ENCODE measurements at regions of chr18 and their contacts with region 1.

Region 1: GRCh38 chr18:79405781-79406575 is 10.2 kb downstream of the NFATC1 start:
- DNase-seq: peak; percentile 59 to 74
- ATAC-seq: peak in 7 of 8 donors; percentile 29 to 77 (median 48)
- H3K4me3 ChIP-seq: peak overlapping the region in 3 of 10 donors; percentile 19 to 47 (median 26)
- H3K27ac ChIP-seq: peak overlapping the region in 9 of 10 donors; percentile 17 to 90 (median 63)
- H3K4me1 ChIP-seq: peaks cover 24 to 59% (median 54%) of the 10 kb centered on the region in 9 donors
- H3K27me3 ChIP-seq: no peaks in the 10 kb centered on the region
- CTCF ChIP-seq: peak in 1 of 9 donors; percentile 6

Region 2: DNA sequence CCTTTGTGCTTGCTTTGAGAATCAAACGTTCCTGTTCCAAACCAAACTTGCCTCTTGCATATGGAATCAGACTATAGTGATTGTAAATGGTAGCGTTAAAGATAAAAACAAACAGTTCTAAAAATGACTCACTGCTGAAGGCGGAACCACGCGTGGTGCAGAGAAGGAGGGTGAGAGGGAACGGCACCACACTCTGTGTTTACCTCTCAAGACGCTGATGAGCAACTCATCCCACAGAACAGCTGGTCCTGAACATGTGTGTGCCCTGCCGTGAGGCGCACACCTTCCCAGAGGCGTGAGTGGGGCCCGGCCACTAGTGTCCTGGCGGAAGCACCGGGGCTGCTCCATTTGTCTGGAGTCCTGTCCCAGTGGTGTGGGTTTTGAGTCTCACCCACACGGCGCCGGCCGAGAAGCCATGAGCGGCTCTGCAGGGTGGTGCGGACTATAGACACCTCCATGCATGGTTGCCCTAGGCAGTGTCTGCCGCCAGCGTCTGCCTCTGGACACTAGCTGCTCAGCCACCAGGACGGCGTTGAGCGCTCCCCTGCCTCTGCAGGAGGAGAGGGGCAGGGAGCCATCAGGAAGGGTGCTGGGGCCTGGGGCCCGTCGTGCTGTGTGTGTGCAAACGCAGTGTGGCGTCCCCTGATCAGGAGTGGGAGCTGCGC is 41.9 kb after region 1 on chr18:
- intact Hi-C with region 1: loop called in 2 of 10 experiments (anchors 5 kb)
- DNase-seq: no peak
- ATAC-seq: peak in 1 of 8 donors; percentile 5
- H3K4me3 ChIP-seq: no peak overlapping the region
- H3K27ac ChIP-seq: no peak overlapping the region
- H3K4me1 ChIP-seq: peaks cover 3 to 19% (median 6%) of the 10 kb centered on the region in 9 donors
- H3K27me3 ChIP-seq: no peaks in the 10 kb centered on the region
- CTCF ChIP-seq: no peak

Region 3: DNA sequence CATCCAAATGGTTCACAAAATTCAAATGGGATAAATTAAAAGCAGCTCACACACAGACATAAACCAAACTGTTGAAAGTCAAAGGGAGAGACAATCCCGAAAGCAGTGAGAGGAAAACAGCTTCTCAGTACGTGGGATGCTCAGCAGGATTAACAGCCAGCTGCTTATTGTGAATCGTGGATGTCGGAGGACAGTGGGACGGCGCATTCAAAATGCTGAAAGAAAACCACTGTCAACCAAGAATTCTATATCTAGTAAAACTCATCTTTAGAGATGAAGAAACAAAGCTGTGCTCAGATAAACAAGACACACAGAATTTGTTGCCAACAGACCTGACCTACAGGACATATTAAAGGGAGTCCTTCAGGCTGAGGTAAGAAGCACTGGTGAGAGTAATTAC is 92.7 kb after region 1 on chr18:
- intact Hi-C with region 1: no loop called
- DNase-seq: no peak
- ATAC-seq: no peak
- H3K4me3 ChIP-seq: no peak overlapping the region
- H3K27ac ChIP-seq: no peak overlapping the region
- H3K4me1 ChIP-seq: peaks cover 0 to 19% (median 6%) of the 10 kb centered on the region in 9 donors
- H3K27me3 ChIP-seq: no peaks in the 10 kb centered on the region
- CTCF ChIP-seq: no peak

Measured in heart right ventricle (tissue), 16 donors.